Dorsolateral prefrontal cortex (tissue), 120 donors: ENCODE measurements at regions of chr2 and their contacts with region 1.

Region 1: DNA sequence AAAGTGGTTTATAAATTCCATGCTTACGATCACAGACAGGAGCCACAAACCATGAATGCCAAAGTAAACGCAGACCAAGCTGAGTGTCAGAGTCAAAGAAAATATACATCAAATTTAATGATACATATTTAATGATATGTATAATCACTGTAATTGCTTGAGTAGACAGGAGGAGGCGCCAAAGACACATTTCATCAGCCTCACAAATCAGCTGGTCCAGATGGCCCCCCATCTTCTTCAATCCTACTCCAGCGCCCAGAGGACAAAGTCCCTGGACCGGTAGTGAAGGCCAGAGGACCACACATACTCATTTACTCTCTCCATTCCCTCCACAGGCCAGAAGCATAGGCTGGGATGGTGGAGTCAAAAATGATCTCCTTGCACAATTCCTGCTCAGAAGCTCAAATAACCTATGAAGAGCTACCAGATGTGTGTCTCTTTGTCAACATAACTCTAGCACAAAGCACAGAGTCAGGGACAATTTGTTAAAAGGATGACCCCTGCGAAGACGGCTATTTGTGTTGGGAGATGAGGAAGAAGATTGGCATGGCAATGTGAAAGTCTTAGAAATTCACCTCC is 149.3 kb upstream of the PGAP1 start:
- DNase-seq: no peak
- H3K4me3 ChIP-seq: no peak overlapping the region
- H3K27ac ChIP-seq: peak overlapping the region in 54 of 59 donors; percentile 13 to 97 (median 92)
- H3K27me3 ChIP-seq: no peaks in the 10 kb centered on the region
- CTCF ChIP-seq: peak in 24 of 56 donors; percentile 10 to 39 (median 18)

Region 2: DNA sequence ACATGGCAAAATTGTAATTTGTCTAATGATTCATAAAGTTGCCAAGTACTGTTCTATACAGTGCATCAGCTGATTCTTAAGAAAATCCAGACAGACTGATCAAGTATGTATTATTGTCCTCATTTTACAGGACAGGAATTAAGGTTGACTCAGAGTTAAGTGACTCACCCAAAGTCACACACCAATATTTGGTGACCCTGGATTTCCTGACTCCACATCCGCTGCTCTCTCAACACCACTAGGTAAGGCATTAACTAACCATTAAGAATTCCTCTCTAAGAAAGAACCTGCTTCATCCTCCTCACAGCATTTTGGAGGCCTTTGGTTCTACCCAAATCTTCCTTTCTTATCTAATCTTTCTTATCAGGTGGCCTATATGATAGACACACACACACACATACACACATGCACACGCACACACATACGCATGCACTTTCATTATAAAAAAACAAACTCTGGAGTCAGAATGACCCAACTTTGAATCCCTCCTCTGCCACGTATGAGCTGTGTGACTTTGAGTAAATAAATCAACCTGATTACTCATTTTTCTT is 83.9 kb after region 1 on chr2:
- intact Hi-C with region 1: loop called in 1 of 2 experiments (anchors 5 kb)
- DNase-seq: no peak
- H3K4me3 ChIP-seq: no peak overlapping the region
- H3K27ac ChIP-seq: peak overlapping the region in 9 of 59 donors; percentile 7 to 66 (median 23)
- H3K27me3 ChIP-seq: no peaks in the 10 kb centered on the region
- CTCF ChIP-seq: no peak